ENCODE measurements at regions of chr1 and their contacts with region 1.

Region 1: DNA sequence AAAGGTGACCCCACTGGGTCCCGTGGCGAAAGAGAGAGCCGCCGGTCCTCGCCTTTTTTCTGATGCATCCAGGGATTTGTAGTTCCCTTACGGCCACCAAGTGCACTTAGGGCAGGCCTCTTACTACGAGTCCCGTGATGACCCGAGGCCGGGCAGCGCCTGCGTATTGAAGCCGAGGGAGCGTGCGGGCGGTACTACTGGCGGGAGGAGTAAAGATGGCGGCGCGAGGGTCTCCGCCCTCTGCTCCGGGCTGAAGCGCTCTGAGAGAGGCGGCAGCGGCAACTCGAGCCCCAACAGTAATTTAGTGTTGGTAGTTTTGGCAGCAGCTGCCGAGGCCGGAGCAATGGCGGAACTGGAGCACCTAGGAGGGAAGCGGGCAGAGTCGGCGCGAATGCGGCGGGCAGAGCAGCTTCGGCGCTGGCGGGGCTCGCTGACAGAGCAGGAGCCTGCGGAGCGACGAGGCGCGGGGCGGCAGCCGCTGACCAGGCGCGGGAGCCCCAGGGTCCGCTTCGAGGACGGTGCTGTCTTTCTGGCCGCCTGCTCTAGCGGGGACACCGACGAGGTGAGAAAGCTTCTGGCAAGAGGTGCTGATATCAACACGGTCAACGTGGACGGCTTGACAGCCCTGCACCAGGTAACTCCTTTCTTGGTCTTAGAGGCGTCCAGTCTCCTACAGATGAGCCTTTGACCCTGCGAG is at the start of gene PPP1R12B:
- DNase-seq: peak; percentile 96 to 98
- ATAC-seq: peak; percentile 98 to 100 (median 99)
- H3K4me3 ChIP-seq: peak within 1 kb of the TSS; percentile 71 to 97 (median 88)
- H3K27ac ChIP-seq: peak within 1 kb of the TSS; percentile 69 to 96 (median 92)
- H3K4me1 ChIP-seq: peaks cover 0 to 45% (median 20%) of the 10 kb centered on the region in 9 donors
- H3K27me3 ChIP-seq: no peaks in the 10 kb centered on the region
- CTCF ChIP-seq: no peak
- total RNA-seq, gene PPP1R12B: 447 to 969 (median 632) TPM

Region 2: GRCh38 chr1:201050515-201051277 is 1298.0 kb before region 1 on chr1:
- intact Hi-C with region 1: no loop called
- DNase-seq: no peak
- ATAC-seq: no peak
- H3K4me3 ChIP-seq: no peak overlapping the region
- H3K27ac ChIP-seq: no peak overlapping the region
- H3K4me1 ChIP-seq: peaks cover 0 to 21% (median 8%) of the 10 kb centered on the region in 9 donors
- H3K27me3 ChIP-seq: peaks cover 0 to 13% (median 6%) of the 10 kb centered on the region in 7 donors
- CTCF ChIP-seq: no peak

Region 3: GRCh38 chr1:201895913-201896807 is 452.5 kb before region 1 on chr1:
- intact Hi-C with region 1: no loop called
- DNase-seq: peak; percentile 90 to 91
- ATAC-seq: peak; percentile 78 to 93 (median 88)
- H3K4me3 ChIP-seq: peak overlapping the region in 2 of 10 donors; percentile 7 to 16
- H3K27ac ChIP-seq: peak overlapping the region; percentile 11 to 85 (median 66)
- H3K4me1 ChIP-seq: peaks cover 3 to 26% (median 11%) of the 10 kb centered on the region in 9 donors
- H3K27me3 ChIP-seq: no peaks in the 10 kb centered on the region
- CTCF ChIP-seq: peak; percentile 83 to 97 (median 95)

Region 4: DNA sequence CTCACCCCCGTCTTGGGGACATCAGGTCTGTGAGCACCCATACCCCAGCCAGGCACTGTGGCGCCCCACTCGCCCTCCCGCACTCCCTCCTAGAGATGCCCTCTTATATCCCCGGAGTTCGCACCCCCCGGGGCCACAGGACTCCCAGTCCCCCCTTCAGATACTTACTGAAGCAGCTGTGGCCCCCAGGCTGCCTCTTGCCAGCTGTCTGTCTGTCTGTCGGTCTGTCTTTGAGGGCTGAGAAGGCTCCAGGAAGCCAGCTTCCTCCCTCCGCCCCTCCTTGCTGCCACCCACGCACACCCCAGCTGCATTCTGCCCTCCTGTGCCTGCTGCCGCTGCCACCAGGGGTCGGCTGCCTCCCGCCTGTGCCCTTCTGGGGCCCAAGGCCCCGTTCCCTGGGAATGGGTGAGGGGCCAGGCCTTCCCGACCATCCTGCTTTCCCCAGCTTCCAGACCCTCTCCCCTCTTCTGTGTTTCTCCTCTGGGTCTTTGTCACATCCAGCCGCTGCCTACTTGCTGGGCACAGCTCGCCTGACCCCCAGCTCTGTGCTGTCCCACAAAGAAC is 188.2 kb before region 1 on chr1 and contains the start of gene PTPN7:
- intact Hi-C with region 1: no loop called
- DNase-seq: no peak
- ATAC-seq: peak in 4 of 8 donors; percentile 11 to 43 (median 36)
- H3K4me3 ChIP-seq: peak within 1 kb of the TSS in 5 of 10 donors; percentile 8 to 61 (median 18)
- H3K27ac ChIP-seq: peak within 1 kb of the TSS in 4 of 10 donors; percentile 9 to 93 (median 54)
- H3K4me1 ChIP-seq: peaks cover 0 to 50% (median under 1%) of the 10 kb centered on the region in 9 donors
- H3K27me3 ChIP-seq: no peaks in the 10 kb centered on the region
- CTCF ChIP-seq: peak in 2 of 9 donors; percentile 18 to 48
- total RNA-seq, gene PTPN7: 0.09 to 6.2 (median 0.47) TPM

Region 5: DNA sequence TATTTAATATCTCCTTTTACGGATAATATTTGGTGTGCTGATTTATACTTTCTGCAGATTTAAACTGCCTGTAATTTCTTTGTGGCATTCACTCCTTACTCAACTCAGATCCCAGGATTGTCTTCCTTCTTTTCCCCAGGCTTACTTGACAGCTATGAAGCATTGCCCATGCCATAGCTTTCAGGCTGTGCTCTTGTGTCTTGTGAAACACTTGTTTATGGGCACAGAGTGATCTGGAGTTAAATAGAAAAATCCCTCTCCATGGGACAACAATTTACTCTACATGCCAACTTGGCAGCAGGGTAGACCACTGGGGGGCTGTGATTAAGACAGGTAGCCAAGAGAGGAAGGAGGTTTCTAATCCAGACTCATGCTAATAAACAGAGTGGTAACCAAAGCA is 57.3 kb after region 1 on chr1:
- intact Hi-C with region 1: loop called in 3 of 10 experiments (anchors 5 to 10 kb)
- DNase-seq: no peak
- ATAC-seq: peak in 3 of 8 donors; percentile 21 to 79 (median 45)
- H3K4me3 ChIP-seq: no peak overlapping the region
- H3K27ac ChIP-seq: peak overlapping the region in 8 of 10 donors; percentile 3 to 65 (median 36)
- H3K4me1 ChIP-seq: peaks cover 0 to 77% (median 46%) of the 10 kb centered on the region in 9 donors
- H3K27me3 ChIP-seq: no peaks in the 10 kb centered on the region
- CTCF ChIP-seq: no peak

Region 6: DNA sequence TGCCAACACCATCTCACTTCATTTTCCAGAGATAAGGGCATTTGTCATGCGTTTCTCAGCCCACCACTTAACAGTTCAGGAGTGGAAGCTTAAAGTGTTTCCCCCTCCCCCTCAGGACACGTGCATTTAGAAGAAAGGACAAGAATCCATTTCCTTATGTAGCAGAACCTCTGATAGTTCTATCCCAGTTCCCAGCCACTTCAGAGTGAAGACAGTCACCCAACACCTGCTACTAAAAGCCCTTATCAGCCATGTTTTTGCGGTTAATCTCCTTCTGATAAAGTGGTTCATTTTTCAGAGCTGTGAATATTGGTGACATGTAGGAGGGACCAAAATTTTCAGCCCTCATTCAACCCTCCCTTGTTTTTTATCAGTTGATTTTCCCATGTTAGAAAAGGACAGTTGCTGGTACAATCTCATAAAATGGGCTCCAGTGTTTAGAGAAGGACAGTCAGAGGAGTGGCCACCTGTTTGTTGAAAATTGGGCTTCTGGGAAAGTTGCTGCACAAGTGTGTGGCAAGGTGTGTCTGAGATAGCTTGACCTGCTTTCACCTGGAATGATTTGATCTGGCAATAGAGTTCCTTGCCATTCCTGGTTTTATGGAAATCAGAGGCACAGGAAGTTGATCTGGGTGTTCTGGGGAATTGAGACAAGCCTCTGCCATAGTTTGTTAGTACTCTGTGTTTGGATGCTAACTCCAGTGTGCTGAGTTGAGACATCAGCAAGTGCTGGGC is 113.9 kb after region 1 on chr1:
- intact Hi-C with region 1: loop called in 6 of 10 experiments (anchors 2 to 10 kb)
- DNase-seq: peak in 1 of 2 donors; percentile 57
- ATAC-seq: peak; percentile 25 to 83 (median 56)
- H3K4me3 ChIP-seq: peak overlapping the region; percentile 1 to 52 (median 41)
- H3K27ac ChIP-seq: peak overlapping the region; percentile 52 to 89 (median 82)
- H3K4me1 ChIP-seq: peaks cover 0 to 57% (median 26%) of the 10 kb centered on the region in 9 donors
- H3K27me3 ChIP-seq: peaks cover 0 to 25% (median 0%) of the 10 kb centered on the region in 7 donors
- CTCF ChIP-seq: no peak

Region 7: GRCh38 chr1:202615501-202616354 is 267.1 kb after region 1 on chr1:
- intact Hi-C with region 1: loop called in 2 of 10 experiments (anchors 10 kb)
- DNase-seq: peak; percentile 36 to 49
- ATAC-seq: peak; percentile 68 to 90 (median 81)
- H3K4me3 ChIP-seq: no peak overlapping the region
- H3K27ac ChIP-seq: peak overlapping the region; percentile 7 to 86 (median 72)
- H3K4me1 ChIP-seq: peaks cover 9 to 55% (median 37%) of the 10 kb centered on the region in 9 donors
- H3K27me3 ChIP-seq: peaks cover 0 to 86% (median 0%) of the 10 kb centered on the region in 7 donors
- CTCF ChIP-seq: no peak

Region 8: GRCh38 chr1:202710070-202711045 is 361.7 kb after region 1 on chr1 and contains the start of gene SYT2:
- intact Hi-C with region 1: loop called in 4 of 10 experiments (anchors 5 to 10 kb)
- DNase-seq: no peak
- ATAC-seq: peak in 6 of 8 donors; percentile 30 to 65 (median 50)
- H3K4me3 ChIP-seq: peak within 1 kb of the TSS; percentile 11 to 45 (median 34)
- H3K27ac ChIP-seq: no peak within 1 kb of the TSS
- H3K4me1 ChIP-seq: peaks cover 0 to 19% (median 15%) of the 10 kb centered on the region in 9 donors
- H3K27me3 ChIP-seq: peaks cover 7 to 98% (median 65%) of the 10 kb centered on the region in 7 donors
- CTCF ChIP-seq: no peak
- total RNA-seq, gene SYT2: 0.02 TPM in 1 of 10 donors, not detected in the others

Region 9: DNA sequence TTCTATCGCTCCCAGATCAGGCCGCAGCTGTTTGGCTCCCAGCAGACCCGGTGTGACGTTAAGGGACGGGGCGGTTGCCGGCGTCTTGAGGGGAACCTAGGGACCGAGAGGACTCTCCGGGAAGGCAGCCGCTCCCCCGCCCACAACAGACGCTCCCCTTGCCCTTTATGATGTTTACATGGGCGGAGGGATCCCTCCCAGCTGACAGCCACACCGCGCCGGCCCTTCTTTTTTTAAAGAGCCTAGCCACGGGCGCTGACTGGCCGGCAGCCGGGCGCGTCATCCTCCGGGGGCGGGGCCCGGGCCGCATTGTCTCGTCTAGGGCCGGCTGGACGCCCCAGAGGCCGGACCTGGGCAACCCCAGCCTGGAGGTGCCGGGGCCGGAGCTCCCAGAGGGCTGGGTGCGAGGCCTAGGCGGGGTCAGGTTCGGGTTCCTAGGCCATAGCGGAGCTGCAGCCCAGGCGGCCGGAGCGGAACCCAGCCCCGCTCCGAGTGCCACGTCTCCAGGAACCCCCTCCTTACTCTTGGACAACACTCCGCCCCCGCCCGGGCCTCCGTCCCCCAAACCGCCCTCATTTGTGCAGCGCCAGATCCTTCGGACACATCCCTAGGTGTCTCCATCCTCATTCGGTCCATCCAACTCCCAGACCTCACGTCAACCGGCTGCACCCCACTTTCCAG is 462.1 kb after region 1 on chr1 and contains the start of gene PCAT6:
- intact Hi-C with region 1: loop called in 1 of 10 experiments (anchors 5 kb)
- DNase-seq: peak; percentile 92 to 96
- ATAC-seq: peak; percentile 93 to 97 (median 95)
- H3K4me3 ChIP-seq: peak within 1 kb of the TSS; percentile 48 to 86 (median 76)
- H3K27ac ChIP-seq: peak within 1 kb of the TSS; percentile 11 to 93 (median 81)
- H3K4me1 ChIP-seq: peaks cover 4 to 42% (median 31%) of the 10 kb centered on the region in 9 donors
- H3K27me3 ChIP-seq: no peaks in the 10 kb centered on the region
- CTCF ChIP-seq: no peak
- total RNA-seq, gene PCAT6: 0.41 to 1.3 (median 0.81) TPM in 9 of 10 donors, not detected in the other

Measured in heart right ventricle (tissue), 16 donors.